ENCODE measurements at regions of chr9 and their contacts with region 1.

Region 1: GRCh38 chr9:105621001-105621400 is 41.3 kb upstream of the TAL2 start:
- DNase-seq: no peak
- ATAC-seq: no peak
- H3K4me3 ChIP-seq: no peak overlapping the region
- H3K27ac ChIP-seq: no peak overlapping the region
- H3K4me1 ChIP-seq: no peaks in the 10 kb centered on the region
- CTCF ChIP-seq: no peak
- EP300 ChIP-seq: no peak
- POLR2A ChIP-seq: no peak
- RAD21 ChIP-seq: no peak

Region 2: GRCh38 chr9:105275938-105276337 is 345.1 kb before region 1 on chr9:
- CTCF ChIA-PET with region 1: no interaction called
- POLR2A ChIA-PET with region 1: no interaction called
- DNase-seq: no peak
- ATAC-seq: no peak
- H3K4me3 ChIP-seq: no peak overlapping the region
- H3K27ac ChIP-seq: no peak overlapping the region
- H3K4me1 ChIP-seq: 0 out of 3 replicates have a peak, but pooled peaks cover 5% of the 10 kb centered on the region
- CTCF ChIP-seq: no peak
- EP300 ChIP-seq: no peak
- POLR2A ChIP-seq: no peak
- RAD21 ChIP-seq: no peak

Region 3: DNA sequence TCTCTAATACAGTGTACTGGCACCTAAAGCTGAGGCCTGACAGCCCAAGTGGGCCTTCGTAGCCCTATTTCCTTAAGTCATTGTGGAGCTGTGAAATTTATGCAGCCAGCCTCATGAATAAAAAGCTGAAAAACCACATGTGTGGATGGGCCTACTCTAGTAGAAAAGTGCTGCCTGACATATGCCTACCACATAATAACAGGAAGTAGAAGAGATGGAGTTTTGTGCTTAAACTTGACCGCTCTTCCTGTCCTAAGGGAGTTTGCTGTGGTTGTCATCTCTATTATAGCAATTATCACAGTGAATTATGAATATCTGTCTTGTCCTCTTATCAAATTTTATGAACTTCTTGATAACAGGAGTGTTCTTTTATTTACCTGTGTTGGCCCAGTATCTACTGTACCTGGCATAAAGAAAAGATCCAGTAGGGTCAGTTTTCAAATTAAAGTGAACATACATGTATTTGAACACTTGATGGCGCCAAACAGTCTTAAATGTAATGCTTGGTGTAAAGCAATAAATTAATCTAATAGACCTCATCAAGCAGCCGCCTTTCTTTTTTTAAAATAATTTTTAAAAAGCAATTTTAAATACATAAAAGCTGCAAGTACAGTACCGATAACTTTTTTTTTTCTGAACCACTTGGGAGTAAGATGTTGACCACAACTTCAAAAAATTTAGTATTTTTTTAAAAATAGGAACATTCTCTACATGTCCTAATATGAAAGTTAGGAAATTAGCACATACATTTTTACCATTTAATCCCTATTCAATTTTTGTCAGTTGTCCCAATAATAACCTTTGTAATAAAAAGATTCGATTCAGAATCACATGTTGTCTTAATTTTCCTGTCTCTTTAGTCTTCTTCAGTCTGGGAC is 12.0 kb before region 1 on chr9:
- CTCF ChIA-PET with region 1: interaction called, 13 read pairs
- POLR2A ChIA-PET with region 1: no interaction called
- DNase-seq: peak; percentile 36 to 52
- ATAC-seq: peak; percentile 70 to 86; a peak in 5 of 6 replicates
- H3K4me3 ChIP-seq: no peak overlapping the region
- H3K27ac ChIP-seq: no peak overlapping the region
- H3K4me1 ChIP-seq: no peaks in the 10 kb centered on the region
- CTCF ChIP-seq: peak; percentile 67
- EP300 ChIP-seq: no peak
- POLR2A ChIP-seq: no peak
- RAD21 ChIP-seq: peak; percentile 58 to 69

Measured in A549 (cell line).